Mammary epithelial cell (primary cell): ENCODE measurements at regions of chr12 and their contacts with region 1.

Region 1: DNA sequence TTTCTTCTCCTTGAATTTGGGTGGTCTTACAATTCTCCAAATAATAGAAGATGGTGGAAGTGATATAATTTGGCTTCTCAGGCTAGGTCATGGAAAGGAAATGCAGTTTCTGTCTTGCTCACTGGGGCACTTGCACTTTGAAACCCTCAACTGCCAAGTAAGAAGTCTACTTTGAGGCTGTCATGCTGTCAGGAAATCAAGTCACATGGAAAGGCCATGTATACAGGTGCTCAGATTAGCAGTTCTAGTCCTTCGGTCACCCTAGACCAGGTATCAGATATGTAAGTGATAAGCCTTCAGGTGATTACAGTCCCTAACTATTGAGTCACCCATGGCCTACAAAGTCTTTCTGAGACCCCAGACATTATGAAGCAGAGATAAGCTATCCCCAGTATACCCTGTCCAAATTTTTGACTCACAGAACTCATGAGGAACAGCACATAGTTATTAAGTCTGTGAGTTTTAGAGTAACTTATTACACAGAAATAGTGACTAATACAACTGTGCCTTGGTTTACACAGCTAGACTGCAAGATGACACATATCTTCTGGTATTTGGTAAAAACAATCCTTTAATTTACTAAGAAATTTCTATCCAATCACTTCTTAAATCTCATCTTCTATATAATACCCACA is 26.3 kb upstream of the BBS10 start:
- DNase-seq: peak; percentile 19
- H3K4me3 ChIP-seq: no peak overlapping the region
- H3K27ac ChIP-seq: no peak overlapping the region
- H3K4me1 ChIP-seq: peaks cover 16% of the 10 kb centered on the region
- H3K27me3 ChIP-seq: no peaks in the 10 kb centered on the region
- CTCF ChIP-seq: no peak

Region 2: DNA sequence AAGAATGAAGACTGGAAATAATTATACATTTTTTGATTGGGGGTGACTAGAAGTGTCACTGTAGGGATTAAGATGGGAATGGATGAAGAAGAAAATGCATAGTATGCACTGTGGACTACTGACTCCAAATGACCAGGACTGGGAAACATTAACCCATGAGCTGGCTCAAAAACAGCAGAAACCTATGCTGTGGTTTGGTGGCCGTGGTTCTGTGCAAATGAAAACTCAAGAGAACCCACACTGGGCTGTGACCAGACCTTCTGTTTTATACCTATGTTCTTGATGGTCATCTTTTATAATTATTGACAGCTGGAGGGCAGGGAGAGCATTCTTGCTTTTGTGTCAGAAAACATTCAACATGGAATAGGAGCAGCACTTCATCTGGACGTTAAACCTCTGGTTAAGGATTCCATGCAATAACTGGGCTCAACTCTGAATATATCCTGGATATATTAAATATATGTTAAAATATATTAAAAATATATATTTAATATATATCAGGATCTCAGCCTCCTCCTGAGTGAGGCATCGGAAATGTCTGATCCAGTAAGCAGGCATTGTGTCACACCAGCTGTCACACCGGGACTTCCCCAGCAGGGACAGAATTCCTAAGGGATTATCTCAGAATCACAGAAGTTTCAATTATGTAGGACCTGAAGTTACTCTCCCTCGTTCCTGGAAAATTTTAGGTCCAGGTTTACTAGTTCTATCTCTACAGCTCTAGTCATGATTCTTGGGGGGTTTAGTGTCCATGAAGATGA is 74.8 kb before region 1 on chr12:
- CTCF ChIA-PET with region 1: no interaction called
- dilution Hi-C with region 1: no loop called
- in situ Hi-C with region 1: no loop called
- intact Hi-C with region 1: no loop called
- DNase-seq: no peak
- H3K4me3 ChIP-seq: no peak overlapping the region
- H3K27ac ChIP-seq: no peak overlapping the region
- H3K4me1 ChIP-seq: no peaks in the 10 kb centered on the region
- H3K27me3 ChIP-seq: no peaks in the 10 kb centered on the region
- CTCF ChIP-seq: no peak

Region 3: DNA sequence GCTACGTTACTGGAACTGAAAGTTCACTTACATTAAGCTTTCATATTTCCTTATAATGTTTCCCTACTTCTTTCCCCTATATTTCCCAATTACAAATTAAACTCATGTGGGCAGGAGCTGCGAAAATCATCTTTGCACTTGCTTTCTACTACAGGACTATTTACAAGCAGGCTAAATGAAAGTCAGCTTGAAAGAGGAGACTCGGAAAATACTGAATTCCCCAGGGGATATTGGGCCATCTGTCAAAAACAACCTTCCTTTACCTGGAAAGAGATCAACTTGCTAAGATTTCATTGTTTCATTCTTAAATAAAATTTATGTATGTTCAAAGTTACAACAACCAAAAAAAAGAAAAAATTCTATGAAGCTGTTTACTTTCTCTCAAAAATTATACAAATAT is 66.5 kb after region 1 on chr12:
- CTCF ChIA-PET with region 1: no interaction called
- dilution Hi-C with region 1: no loop called
- in situ Hi-C with region 1: no loop called
- intact Hi-C with region 1: no loop called
- DNase-seq: no peak
- H3K4me3 ChIP-seq: no peak overlapping the region
- H3K27ac ChIP-seq: no peak overlapping the region
- H3K4me1 ChIP-seq: no peaks in the 10 kb centered on the region
- H3K27me3 ChIP-seq: no peaks in the 10 kb centered on the region
- CTCF ChIP-seq: no peak

Region 4: GRCh38 chr12:76559400-76560085 is 185.0 kb after region 1 on chr12 and contains the start of gene OSBPL8:
- CTCF ChIA-PET with region 1: no interaction called
- dilution Hi-C with region 1: no loop called
- in situ Hi-C with region 1: no loop called
- intact Hi-C with region 1: loop called (anchors 10 kb)
- DNase-seq: peak; percentile 92
- H3K4me3 ChIP-seq: peak within 1 kb of the TSS; percentile 70 to 74 (median 74)
- H3K27ac ChIP-seq: peak within 1 kb of the TSS; percentile 89
- H3K4me1 ChIP-seq: peaks cover 5% of the 10 kb centered on the region
- H3K27me3 ChIP-seq: no peaks in the 10 kb centered on the region
- CTCF ChIP-seq: peak in 1 of 2 donors; percentile 31
- total RNA-seq, gene OSBPL8: 87.4 to 88.4 TPM